ENCODE measurements at regions of chr17 and their contacts with region 1.

Region 1: GRCh38 chr17:31321481-31321880 is at the start of gene EVI2A:
- DNase-seq: peak; percentile 30 to 95 (median 87)
- ATAC-seq: peak; percentile 93
- H3K4me3 ChIP-seq: peak within 1 kb of the TSS; percentile 66
- H3K4me3 Mint-ChIP-seq: peak within 1 kb of the TSS; percentile 78 to 96 (median 89)
- H3K27ac ChIP-seq: peak within 1 kb of the TSS; percentile 90
- H3K27ac Mint-ChIP-seq: peak within 1 kb of the TSS; percentile 88 to 98 (median 94)
- H3K4me1 ChIP-seq: peaks cover 11 to 28% of the 10 kb centered on the region in 2 donors
- H3K4me1 Mint-ChIP-seq: peaks cover 26 to 41% (median 34%) of the 10 kb centered on the region in 7 donors
- H3K27me3 ChIP-seq: no peaks in the 10 kb centered on the region
- H3K27me3 Mint-ChIP-seq: no peaks in the 10 kb centered on the region
- total RNA-seq, gene EVI2A: 40.9 to 134 (median 60.2) TPM

Region 2: DNA sequence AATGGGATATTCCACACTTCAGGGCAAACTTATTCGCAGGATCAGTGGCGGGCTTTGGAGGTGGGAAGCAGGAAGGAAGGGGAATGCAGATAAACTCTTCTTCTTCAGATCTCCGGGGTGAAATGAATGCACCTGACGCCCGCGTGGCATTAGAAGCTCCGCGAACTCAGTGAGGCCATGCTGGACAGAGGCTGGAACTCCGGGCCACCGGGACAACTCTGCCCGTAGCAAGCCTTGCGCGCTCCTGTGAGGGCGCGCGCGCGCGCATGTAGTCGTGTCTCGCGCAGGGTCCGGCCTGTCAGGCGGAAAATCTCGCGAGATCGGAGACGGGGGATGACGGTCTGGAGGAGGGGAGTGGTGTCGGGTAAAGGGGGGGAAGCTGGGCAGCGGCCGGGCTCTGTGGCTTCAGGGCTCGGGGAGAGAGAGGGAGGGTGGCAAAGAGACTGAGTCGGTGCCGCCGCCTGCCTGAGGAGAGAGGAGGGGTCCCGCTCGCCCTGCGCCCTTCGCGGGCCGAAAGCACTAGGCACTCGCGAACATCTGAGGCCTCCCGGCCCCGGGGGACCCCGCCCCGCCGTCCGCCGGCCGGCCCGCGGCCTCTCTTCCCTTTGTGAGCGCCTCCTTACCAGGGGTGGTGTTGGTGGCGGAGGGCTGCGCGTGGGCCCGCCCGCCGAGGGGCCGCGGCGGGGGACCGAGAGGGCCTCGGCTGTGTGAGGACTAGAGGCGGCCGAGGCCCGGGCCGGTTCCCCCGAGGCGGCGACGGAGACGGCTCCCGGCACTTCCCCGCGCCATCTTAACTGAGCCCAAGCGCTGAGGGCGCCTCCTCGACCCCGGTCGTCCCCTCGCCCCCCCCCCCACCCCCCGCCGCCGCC is 1931.3 kb before region 1 on chr17 and contains the start of gene TAOK1:
- CTCF ChIA-PET with region 1: no interaction called
- POLR2A ChIA-PET with region 1: no interaction called
- intact Hi-C with region 1: loop called in 1 of 2 experiments (anchors 10 kb)
- DNase-seq: peak; percentile 93 to 98 (median 96)
- ATAC-seq: peak; percentile 97
- H3K4me3 ChIP-seq: peak within 1 kb of the TSS; percentile 94
- H3K4me3 Mint-ChIP-seq: peak within 1 kb of the TSS; percentile 95 to 99 (median 98)
- H3K27ac ChIP-seq: peak within 1 kb of the TSS; percentile 98
- H3K27ac Mint-ChIP-seq: peak within 1 kb of the TSS; percentile 92 to 98 (median 97)
- H3K4me1 ChIP-seq: peaks cover 14 to 25% of the 10 kb centered on the region in 2 donors
- H3K4me1 Mint-ChIP-seq: peaks cover 36 to 49% (median 44%) of the 10 kb centered on the region in 7 donors
- H3K27me3 ChIP-seq: no peaks in the 10 kb centered on the region
- H3K27me3 Mint-ChIP-seq: peaks cover 0 to 2% (median 0%) of the 10 kb centered on the region in 5 donors
- total RNA-seq, gene TAOK1: 62.4 to 70.1 (median 66.5) TPM

Region 3: DNA sequence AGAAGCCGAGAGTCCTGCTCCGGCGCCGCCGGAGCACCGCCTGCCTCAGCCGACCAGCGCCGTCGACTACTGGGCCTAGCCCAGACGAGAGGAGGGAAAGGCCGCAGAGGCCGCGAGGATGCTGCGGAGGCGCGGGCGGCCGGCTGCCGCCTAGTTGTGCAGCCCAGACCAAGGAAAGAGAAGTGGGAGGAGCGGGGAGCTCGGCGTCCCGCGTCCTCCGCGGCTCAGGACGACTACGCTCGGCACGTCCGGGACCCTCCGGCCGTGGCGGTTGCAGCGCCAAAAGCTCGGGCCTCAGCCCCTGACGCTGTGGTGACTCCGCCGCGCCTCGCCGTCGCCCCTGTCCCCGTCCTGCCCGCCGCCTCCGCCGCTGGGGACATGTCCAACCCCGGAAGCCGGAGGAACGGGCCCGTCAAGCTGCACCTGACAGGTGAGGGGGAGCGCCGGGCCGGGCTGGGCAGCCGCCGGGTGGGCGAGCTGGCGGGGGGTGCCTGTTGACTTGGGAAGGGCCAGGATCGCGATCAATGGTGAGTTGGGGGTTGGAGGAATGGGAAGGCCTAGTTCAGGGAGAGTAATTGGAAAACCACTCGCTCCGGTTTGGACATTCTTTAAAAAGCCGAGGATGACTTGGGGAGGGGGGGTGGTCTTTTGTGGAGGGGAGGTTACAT is 313.0 kb before region 1 on chr17:
- CTCF ChIA-PET with region 1: no interaction called
- POLR2A ChIA-PET with region 1: interaction called, 4 read pairs
- intact Hi-C with region 1: loop called in 1 of 2 experiments (anchors 5 kb)
- DNase-seq: peak; percentile 16 to 60 (median 40)
- ATAC-seq: peak; percentile 77
- H3K4me3 ChIP-seq: peak overlapping the region; percentile 75
- H3K4me3 Mint-ChIP-seq: peak overlapping the region; percentile 86 to 97 (median 92)
- H3K27ac ChIP-seq: peak overlapping the region; percentile 61
- H3K27ac Mint-ChIP-seq: peak overlapping the region; percentile 21 to 94 (median 88)
- H3K4me1 ChIP-seq: peaks cover 0 to 9% of the 10 kb centered on the region in 2 donors
- H3K4me1 Mint-ChIP-seq: peaks cover 8 to 23% (median 18%) of the 10 kb centered on the region in 7 donors
- H3K27me3 ChIP-seq: no peaks in the 10 kb centered on the region
- H3K27me3 Mint-ChIP-seq: peaks cover 0 to 31% (median 0%) of the 10 kb centered on the region in 5 donors

Region 4: GRCh38 chr17:31269578-31269983 is 51.9 kb before region 1 on chr17:
- CTCF ChIA-PET with region 1: interaction called, 3 read pairs
- POLR2A ChIA-PET with region 1: no interaction called
- intact Hi-C with region 1: loop called in 1 of 2 experiments (anchors 1 kb)
- DNase-seq: no peak
- ATAC-seq: no peak
- H3K4me3 ChIP-seq: no peak overlapping the region
- H3K4me3 Mint-ChIP-seq: no peak overlapping the region
- H3K27ac ChIP-seq: no peak overlapping the region
- H3K27ac Mint-ChIP-seq: no peak overlapping the region
- H3K4me1 ChIP-seq: no peaks in the 10 kb centered on the region
- H3K4me1 Mint-ChIP-seq: peaks cover 0 to 9% (median 5%) of the 10 kb centered on the region in 7 donors
- H3K27me3 ChIP-seq: no peaks in the 10 kb centered on the region
- H3K27me3 Mint-ChIP-seq: no peaks in the 10 kb centered on the region

Region 5: GRCh38 chr17:31373150-31374093 is 51.9 kb after region 1 on chr17:
- CTCF ChIA-PET with region 1: interaction called, 12 read pairs
- POLR2A ChIA-PET with region 1: interaction called, 4 read pairs
- intact Hi-C with region 1: loop called (anchors 1 to 2 kb)
- DNase-seq: peak in 7 of 9 donors; percentile 51 to 73 (median 65)
- ATAC-seq: peak; percentile 90
- H3K4me3 ChIP-seq: no peak overlapping the region
- H3K4me3 Mint-ChIP-seq: no peak overlapping the region
- H3K27ac ChIP-seq: no peak overlapping the region
- H3K27ac Mint-ChIP-seq: peak overlapping the region in 3 of 9 donors; percentile 10 to 28 (median 26)
- H3K4me1 ChIP-seq: peaks cover 0 to 4% of the 10 kb centered on the region in 2 donors
- H3K4me1 Mint-ChIP-seq: peaks cover 17 to 30% (median 27%) of the 10 kb centered on the region in 7 donors
- H3K27me3 ChIP-seq: no peaks in the 10 kb centered on the region
- H3K27me3 Mint-ChIP-seq: no peaks in the 10 kb centered on the region

Region 6: DNA sequence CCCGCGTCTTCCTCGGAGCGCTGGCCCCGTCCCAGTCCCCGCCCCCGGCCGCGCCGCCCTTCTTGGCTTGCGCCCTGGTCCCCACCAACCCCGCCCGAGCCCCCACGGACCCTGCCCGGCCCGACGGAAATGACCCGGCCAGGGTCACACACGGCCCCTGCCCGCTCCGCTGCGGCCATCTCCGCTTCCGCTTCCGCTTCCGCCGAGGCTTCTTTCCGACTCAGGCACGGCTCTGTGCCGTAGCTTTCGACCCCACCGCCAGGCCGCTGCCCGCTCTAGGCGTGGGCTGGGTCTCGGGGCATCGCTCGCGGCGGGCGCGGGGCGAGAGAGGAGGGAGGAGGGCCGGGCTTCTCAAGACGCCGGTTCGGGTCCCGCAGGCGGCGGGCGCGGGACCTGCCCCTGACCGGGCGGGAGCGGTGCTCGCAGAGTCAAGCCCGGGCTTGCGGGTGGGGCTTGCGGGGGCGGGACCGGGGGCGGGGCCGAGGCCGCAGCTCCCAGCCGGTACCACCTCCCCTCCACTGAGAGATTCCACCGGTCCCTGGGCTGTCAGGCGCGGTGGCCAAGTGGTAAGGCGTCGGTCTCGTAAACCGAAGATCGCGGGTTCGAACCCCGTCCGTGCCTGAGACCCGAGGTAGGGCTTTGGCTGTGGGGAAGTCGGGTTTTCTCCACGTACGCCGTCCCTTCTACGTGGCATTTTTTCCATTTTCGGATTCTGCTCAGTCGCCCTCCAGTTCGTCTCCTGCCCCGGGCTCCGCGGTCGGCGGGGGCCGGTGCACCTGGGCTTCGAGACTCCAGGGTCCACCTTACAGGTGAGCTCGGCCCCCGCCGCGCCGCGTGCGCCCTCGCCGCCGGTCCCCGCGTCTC is 228.3 kb after region 1 on chr17:
- CTCF ChIA-PET with region 1: no interaction called
- POLR2A ChIA-PET with region 1: no interaction called
- intact Hi-C with region 1: loop called in 1 of 2 experiments (anchors 1 kb)
- DNase-seq: peak; percentile 75 to 98 (median 85)
- ATAC-seq: peak; percentile 93
- H3K4me3 ChIP-seq: peak overlapping the region; percentile 77
- H3K4me3 Mint-ChIP-seq: peak overlapping the region; percentile 84 to 94 (median 92)
- H3K27ac ChIP-seq: peak overlapping the region; percentile 75
- H3K27ac Mint-ChIP-seq: peak overlapping the region; percentile 71 to 93 (median 84)
- H3K4me1 ChIP-seq: peaks cover 0 to 8% of the 10 kb centered on the region in 2 donors
- H3K4me1 Mint-ChIP-seq: peaks cover 8 to 25% (median 18%) of the 10 kb centered on the region in 7 donors
- H3K27me3 ChIP-seq: no peaks in the 10 kb centered on the region
- H3K27me3 Mint-ChIP-seq: peaks cover 0 to 24% (median 0%) of the 10 kb centered on the region in 5 donors

Region 7: GRCh38 chr17:32819035-32819434 is 1497.6 kb after region 1 on chr17:
- CTCF ChIA-PET with region 1: no interaction called
- POLR2A ChIA-PET with region 1: no interaction called
- intact Hi-C with region 1: no loop called
- DNase-seq: no peak
- ATAC-seq: no peak
- H3K4me3 ChIP-seq: no peak overlapping the region
- H3K4me3 Mint-ChIP-seq: no peak overlapping the region
- H3K27ac ChIP-seq: no peak overlapping the region
- H3K27ac Mint-ChIP-seq: no peak overlapping the region
- H3K4me1 ChIP-seq: no peaks in the 10 kb centered on the region
- H3K4me1 Mint-ChIP-seq: peaks cover 0 to 6% (median 3%) of the 10 kb centered on the region in 7 donors
- H3K27me3 ChIP-seq: no peaks in the 10 kb centered on the region
- H3K27me3 Mint-ChIP-seq: peaks cover 0 to 38% (median 16%) of the 10 kb centered on the region in 5 donors